ENCODE measurements at regions of chr3 and their contacts with region 1.

Region 1: DNA sequence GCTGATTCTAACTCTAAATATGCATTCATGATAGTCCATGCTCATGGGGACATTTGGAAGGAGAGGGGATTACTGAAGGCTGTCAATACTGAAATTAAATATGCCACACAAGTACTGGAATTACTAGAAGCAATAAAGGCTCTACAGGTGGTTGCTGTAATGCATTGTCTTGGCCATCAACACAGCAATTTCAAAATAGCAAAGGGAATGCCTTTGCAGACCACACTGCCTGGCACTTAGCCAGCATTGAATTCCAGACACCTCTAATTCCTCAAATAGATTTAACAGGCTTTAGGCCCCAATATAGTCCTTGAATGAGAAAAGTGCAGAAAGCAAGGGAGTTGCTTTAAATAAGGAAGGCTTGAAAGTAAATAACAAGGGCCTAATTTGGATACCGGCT is 115.8 kb upstream of the PLCL2 start:
- DNase-seq: no peak
- ATAC-seq: peak in 1 of 4 donors; percentile 20
- H3K4me3 ChIP-seq: no peak overlapping the region
- H3K27ac ChIP-seq: peak overlapping the region; percentile 71
- H3K4me1 ChIP-seq: peaks cover 33% of the 10 kb centered on the region
- H3K27me3 ChIP-seq: no peaks in the 10 kb centered on the region
- CTCF ChIP-seq: no peak

Region 2: GRCh38 chr3:16715323-16715722 is 53.6 kb before region 1 on chr3:
- intact Hi-C with region 1: no loop called
- DNase-seq: no peak
- ATAC-seq: no peak
- H3K4me3 ChIP-seq: no peak overlapping the region
- H3K27ac ChIP-seq: no peak overlapping the region
- H3K4me1 ChIP-seq: no peaks in the 10 kb centered on the region
- H3K27me3 ChIP-seq: no peaks in the 10 kb centered on the region
- CTCF ChIP-seq: no peak

Region 3: DNA sequence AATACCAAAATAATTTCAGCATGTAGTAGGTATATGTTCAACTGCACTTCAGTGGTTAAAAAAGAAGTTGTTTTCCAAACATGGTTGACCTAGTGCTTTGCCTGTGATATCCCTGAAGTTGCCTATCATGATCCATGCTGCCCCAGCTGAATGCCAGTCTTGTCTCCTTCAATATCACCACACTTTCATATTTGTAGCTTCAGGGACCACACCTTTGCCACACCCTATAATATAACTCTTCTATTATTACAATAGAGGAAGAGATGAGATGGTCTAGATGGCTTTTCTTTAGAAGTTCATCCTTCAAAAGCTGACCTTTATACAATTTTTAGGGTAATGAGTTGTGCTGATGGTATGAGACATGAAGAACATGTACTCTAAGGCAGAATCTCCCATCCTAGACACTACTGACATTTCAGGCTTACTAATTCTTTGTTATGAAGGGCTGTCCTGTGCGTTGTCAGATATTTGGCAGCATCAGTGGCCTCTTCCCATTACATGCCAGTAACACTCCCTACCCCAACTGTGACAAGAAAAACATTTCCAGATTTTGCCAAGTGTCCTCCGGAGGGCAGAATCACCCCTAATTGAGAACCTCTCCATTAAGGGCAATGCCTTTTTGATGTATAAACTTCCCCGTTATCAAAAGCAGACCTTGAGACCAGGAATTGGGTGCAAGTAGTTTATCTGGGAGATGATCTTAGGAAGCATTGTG is 39.6 kb after region 1 on chr3:
- intact Hi-C with region 1: loop called in 1 of 2 experiments (anchors 5 kb)
- DNase-seq: no peak
- ATAC-seq: peak in 3 of 4 donors; percentile 60 to 81 (median 80)
- H3K4me3 ChIP-seq: no peak overlapping the region
- H3K27ac ChIP-seq: no peak overlapping the region
- H3K4me1 ChIP-seq: peaks cover 6% of the 10 kb centered on the region
- H3K27me3 ChIP-seq: no peaks in the 10 kb centered on the region
- CTCF ChIP-seq: no peak

Region 4: GRCh38 chr3:16824081-16824696 is 55.2 kb after region 1 on chr3:
- intact Hi-C with region 1: no loop called
- DNase-seq: no peak
- ATAC-seq: no peak
- H3K4me3 ChIP-seq: no peak overlapping the region
- H3K27ac ChIP-seq: no peak overlapping the region
- H3K4me1 ChIP-seq: peaks cover 7% of the 10 kb centered on the region
- H3K27me3 ChIP-seq: no peaks in the 10 kb centered on the region
- CTCF ChIP-seq: no peak

Region 5: GRCh38 chr3:16838561-16838960 is 69.6 kb after region 1 on chr3:
- intact Hi-C with region 1: loop called (anchors 5 kb)
- DNase-seq: peak; percentile 54 to 78
- ATAC-seq: peak; percentile 87 to 90 (median 88)
- H3K4me3 ChIP-seq: peak overlapping the region; percentile 55
- H3K27ac ChIP-seq: peak overlapping the region; percentile 87
- H3K4me1 ChIP-seq: peaks cover 31% of the 10 kb centered on the region
- H3K27me3 ChIP-seq: no peaks in the 10 kb centered on the region
- CTCF ChIP-seq: no peak

Measured in psoas muscle (tissue), 8 donors.